ENCODE measurements at regions of chr2 and their contacts with region 1.

Region 1: DNA sequence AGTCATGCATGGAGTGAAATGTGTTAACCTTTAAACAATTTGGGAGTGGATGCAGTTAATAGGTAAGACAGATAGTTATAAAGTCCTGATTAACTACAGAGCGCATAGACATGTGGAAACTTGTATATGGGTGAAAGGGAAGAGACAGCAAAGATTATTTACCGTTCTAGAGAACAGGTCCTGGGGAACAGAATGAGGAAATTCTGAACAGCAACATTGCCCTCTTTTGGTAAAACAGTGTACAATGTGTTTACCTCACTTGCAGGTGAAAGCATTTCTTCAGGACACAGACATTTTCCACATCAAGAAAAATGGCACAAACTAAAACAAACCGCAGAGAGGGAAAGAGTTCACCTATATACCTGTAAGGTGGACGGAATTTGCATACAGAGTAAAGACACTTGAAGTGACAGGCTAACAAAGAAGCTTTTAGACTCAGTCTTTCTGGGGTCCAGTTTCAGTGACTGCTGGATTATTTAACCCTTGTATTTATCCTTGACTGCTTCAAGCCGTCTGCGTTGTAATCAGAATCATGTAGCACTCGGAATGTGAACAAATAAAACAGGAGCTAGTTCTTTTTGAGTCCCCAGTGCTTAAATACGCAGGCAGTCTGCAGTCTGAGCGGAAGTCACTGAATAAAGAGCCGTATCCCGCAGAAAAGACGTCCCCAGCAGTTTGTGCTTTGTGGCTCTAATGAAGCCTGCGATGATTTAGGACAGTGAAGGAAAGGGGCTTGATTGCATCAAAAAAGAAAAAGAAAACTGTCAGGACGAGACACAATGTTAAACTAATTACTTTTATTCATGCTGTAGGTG is 364.8 kb upstream of the GALNT5 start:
- DNase-seq: peak in 1 of 2 experiments; percentile 59
- H3K4me3 ChIP-seq: peak overlapping the region; percentile 58
- H3K27ac ChIP-seq: peak overlapping the region; percentile 34
- H3K4me1 ChIP-seq: peaks cover 21% of the 10 kb centered on the region
- H3K27me3 ChIP-seq: no peaks in the 10 kb centered on the region
- CTCF ChIP-seq: peak; percentile 65

Region 2: GRCh38 chr2:155377266-155377680 is 1515.4 kb before region 1 on chr2:
- CTCF ChIA-PET with region 1: no interaction called
- POLR2A ChIA-PET with region 1: no interaction called
- intact Hi-C with region 1: loop called (anchors 1 kb)
- DNase-seq: no peak
- H3K4me3 ChIP-seq: no peak overlapping the region
- H3K27ac ChIP-seq: no peak overlapping the region
- H3K4me1 ChIP-seq: no peaks in the 10 kb centered on the region
- H3K27me3 ChIP-seq: no peaks in the 10 kb centered on the region
- CTCF ChIP-seq: peak; percentile 62

Region 3: GRCh38 chr2:156435715-156436496 is 456.8 kb before region 1 on chr2 and contains the start of gene GPD2:
- CTCF ChIA-PET with region 1: no interaction called
- POLR2A ChIA-PET with region 1: no interaction called
- intact Hi-C with region 1: loop called (anchors 2 kb)
- DNase-seq: peak; percentile 74 to 88
- H3K4me3 ChIP-seq: peak within 1 kb of the TSS; percentile 65
- H3K27ac ChIP-seq: peak within 1 kb of the TSS; percentile 95
- H3K4me1 ChIP-seq: peaks cover 55% of the 10 kb centered on the region
- H3K27me3 ChIP-seq: no peaks in the 10 kb centered on the region
- CTCF ChIP-seq: no peak
- total RNA-seq, gene GPD2: 47.1 and 67.8 TPM in 2 replicates

Region 4: GRCh38 chr2:156874707-156875106 is 18.0 kb before region 1 on chr2:
- CTCF ChIA-PET with region 1: no interaction called
- POLR2A ChIA-PET with region 1: no interaction called
- intact Hi-C with region 1: no loop called
- DNase-seq: no peak
- H3K4me3 ChIP-seq: no peak overlapping the region
- H3K27ac ChIP-seq: no peak overlapping the region
- H3K4me1 ChIP-seq: no peaks in the 10 kb centered on the region
- H3K27me3 ChIP-seq: no peaks in the 10 kb centered on the region
- CTCF ChIP-seq: no peak

Region 5: GRCh38 chr2:156935632-156936031 is 43.0 kb after region 1 on chr2:
- CTCF ChIA-PET with region 1: no interaction called
- POLR2A ChIA-PET with region 1: no interaction called
- intact Hi-C with region 1: loop called (anchors 2 kb)
- DNase-seq: peak; percentile 26 to 82
- H3K4me3 ChIP-seq: no peak overlapping the region
- H3K27ac ChIP-seq: no peak overlapping the region
- H3K4me1 ChIP-seq: 0 out of 2 replicates have a peak, but pooled peaks cover 5% of the 10 kb centered on the region
- H3K27me3 ChIP-seq: no peaks in the 10 kb centered on the region
- CTCF ChIP-seq: no peak

Region 6: GRCh38 chr2:156955701-156956100 is 63.0 kb after region 1 on chr2:
- CTCF ChIA-PET with region 1: no interaction called
- POLR2A ChIA-PET with region 1: no interaction called
- intact Hi-C with region 1: no loop called
- DNase-seq: no peak
- H3K4me3 ChIP-seq: no peak overlapping the region
- H3K27ac ChIP-seq: no peak overlapping the region
- H3K4me1 ChIP-seq: no peaks in the 10 kb centered on the region
- H3K27me3 ChIP-seq: no peaks in the 10 kb centered on the region
- CTCF ChIP-seq: no peak

Region 7: DNA sequence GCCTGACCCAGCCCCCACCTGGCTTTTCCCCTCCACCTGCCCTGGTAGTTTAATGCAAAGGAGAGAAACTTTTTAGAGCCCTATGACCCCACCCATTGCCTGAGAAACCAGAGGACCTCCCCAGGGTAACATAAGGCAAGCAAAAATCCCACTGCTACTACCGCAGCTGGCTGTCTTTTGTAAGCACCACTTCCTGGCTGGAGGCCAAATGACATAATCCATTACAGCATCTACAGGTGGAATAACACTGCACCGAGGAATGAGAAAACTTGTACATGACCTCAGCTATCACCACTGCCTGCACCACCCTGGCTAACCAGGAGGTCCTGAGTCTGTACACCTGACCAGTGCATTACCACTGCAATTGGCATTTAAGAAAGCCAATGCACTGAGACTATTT is 215.2 kb after region 1 on chr2:
- CTCF ChIA-PET with region 1: no interaction called
- POLR2A ChIA-PET with region 1: no interaction called
- intact Hi-C with region 1: no loop called
- DNase-seq: peak in 1 of 2 experiments; percentile 10
- H3K4me3 ChIP-seq: no peak overlapping the region
- H3K27ac ChIP-seq: no peak overlapping the region
- H3K4me1 ChIP-seq: no peaks in the 10 kb centered on the region
- H3K27me3 ChIP-seq: no peaks in the 10 kb centered on the region
- CTCF ChIP-seq: no peak

Region 8: DNA sequence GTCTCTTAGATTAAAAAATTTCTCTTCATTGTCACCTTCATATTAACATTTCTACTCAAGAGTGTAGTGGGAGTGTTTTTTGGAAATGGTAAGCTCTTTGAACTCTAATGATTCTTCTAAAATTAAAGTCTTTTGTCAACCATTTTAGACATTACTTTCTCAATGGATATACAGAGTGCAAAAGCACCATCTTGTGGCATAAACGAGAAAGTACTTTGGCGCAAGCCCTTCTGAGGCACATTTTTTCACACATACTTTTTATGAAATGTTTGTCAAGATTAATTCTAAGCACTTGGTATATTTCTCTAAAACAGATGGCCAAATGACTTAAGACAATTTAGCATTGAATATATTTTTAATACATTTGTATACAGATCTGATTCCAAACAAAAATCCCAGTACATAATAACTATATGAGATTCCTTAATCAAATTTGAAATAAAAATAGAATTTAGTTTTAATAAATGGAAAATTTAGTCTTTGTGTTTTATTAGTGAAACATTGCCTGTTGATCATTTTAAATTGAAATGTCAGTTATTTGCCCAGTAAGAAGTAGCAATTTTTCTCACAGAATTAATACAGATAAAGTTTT is 301.5 kb after region 1 on chr2:
- CTCF ChIA-PET with region 1: no interaction called
- POLR2A ChIA-PET with region 1: no interaction called
- intact Hi-C with region 1: loop called (anchors 5 kb)
- DNase-seq: peak in 1 of 2 experiments; percentile 3
- H3K4me3 ChIP-seq: no peak overlapping the region
- H3K27ac ChIP-seq: no peak overlapping the region
- H3K4me1 ChIP-seq: no peaks in the 10 kb centered on the region
- H3K27me3 ChIP-seq: no peaks in the 10 kb centered on the region
- CTCF ChIP-seq: peak; percentile 73

Region 9: DNA sequence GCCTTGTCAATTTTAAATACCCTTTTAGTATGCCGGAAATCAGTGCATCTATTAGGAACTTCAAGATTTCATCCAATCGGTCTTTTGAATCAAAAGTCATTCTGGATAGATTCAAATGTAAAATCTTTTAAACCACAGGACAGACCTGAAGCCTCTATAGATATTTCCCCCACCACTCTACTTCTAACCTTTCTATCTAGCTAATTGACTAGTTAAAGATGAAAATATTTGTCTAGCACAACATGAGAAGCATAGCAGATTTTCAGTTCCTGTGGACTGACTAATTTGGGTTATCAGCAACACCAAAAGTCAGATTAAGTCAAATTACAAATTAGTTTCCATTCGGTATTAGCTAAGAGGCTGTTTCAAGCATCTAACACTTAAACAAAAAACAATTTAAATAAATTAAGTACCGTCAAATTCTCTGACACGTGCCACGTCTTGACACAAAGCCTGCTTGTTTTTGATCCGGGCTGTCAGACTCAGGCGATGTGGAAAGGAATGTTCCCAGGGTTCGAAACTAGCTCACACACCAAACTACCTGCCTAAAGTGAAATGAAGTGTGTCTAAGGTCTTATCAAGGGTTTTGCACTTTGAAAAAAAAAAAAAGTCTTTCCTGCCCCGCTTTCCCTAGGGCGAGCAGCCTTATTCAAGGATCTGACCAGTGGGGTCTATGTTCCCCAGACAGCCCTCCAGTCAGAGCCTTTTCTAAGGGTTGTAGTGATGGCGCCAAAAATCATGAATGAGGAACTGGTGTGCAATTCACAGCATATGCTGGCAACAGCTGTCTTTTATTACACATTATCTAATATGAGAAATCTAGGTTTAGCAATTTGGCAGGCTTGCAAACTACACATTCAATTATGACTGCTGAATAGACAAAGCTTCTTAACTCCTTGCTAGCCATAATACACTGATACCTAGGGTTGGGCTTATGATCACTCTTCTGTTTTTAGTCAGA is 546.5 kb after region 1 on chr2:
- CTCF ChIA-PET with region 1: no interaction called
- POLR2A ChIA-PET with region 1: no interaction called
- intact Hi-C with region 1: no loop called
- DNase-seq: no peak
- H3K4me3 ChIP-seq: no peak overlapping the region
- H3K27ac ChIP-seq: no peak overlapping the region
- H3K4me1 ChIP-seq: no peaks in the 10 kb centered on the region
- H3K27me3 ChIP-seq: no peaks in the 10 kb centered on the region
- CTCF ChIP-seq: no peak

Measured in PC-9 (cell line).